ENCODE measurements at regions of chrX and their contacts with region 1.

Region 1: DNA sequence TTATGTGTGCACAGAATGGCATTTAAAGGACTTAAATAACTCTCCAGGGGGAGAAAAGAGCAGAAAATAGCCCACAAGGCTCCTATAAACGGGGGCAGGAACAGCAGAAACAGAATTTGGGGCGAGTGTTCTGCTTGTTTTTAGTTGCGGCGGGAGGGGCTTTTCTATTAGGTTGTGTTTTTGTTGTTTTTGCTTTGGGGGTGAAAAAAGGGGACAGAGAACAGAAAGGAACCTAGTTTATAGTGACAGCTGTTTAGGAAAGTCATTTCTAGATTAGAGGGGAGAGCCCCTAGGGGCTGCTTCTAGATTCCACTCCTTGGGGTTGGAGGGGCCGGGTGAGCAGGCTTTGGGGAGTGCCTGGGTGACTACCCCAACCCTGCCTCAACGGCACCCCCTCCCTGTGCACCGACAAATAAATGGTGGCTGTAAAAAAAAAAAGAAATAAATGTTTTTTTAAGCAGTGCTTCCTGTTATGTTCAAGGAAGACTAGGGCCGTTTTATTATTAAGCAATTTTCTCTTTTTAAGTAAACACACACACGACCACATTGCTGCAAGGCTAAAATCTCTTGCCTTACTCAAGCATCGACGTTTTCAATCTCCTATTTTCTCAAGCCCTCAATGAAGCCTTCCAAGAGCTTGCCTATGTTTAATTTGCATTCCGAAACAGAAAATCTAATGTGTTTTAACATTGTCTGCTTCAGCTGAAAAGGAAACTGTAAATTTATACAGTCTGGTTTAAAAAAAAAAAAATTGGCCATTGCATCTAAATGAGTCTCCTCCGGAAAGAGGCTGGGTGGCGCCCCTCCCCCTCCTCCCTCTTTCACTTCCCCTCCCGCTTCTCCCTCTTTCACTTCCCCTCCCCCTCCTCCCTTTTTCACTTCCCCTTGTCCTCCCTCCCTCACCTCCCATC is 123.3 kb upstream of the TBL1X start:
- DNase-seq: peak; percentile 54
- H3K4me3 ChIP-seq: peak overlapping the region in 1 of 3 experiments; percentile 59
- H3K27ac ChIP-seq: peak overlapping the region; percentile 57
- H3K4me1 ChIP-seq: peaks cover 9% of the 10 kb centered on the region
- H3K27me3 ChIP-seq: no peaks in the 10 kb centered on the region
- CTCF ChIP-seq: no peak
- POLR2A ChIP-seq: no peak

Region 2: GRCh38 chrX:9163214-9163681 is 178.3 kb before region 1 on chrX:
- CTCF ChIA-PET with region 1: no interaction called
- POLR2A ChIA-PET with region 1: no interaction called
- dilution Hi-C with region 1: no loop called
- intact Hi-C with region 1: loop called (anchors 5 kb)
- DNase-seq: peak; percentile 33
- H3K4me3 ChIP-seq: peak overlapping the region in 1 of 3 experiments; percentile 10
- H3K27ac ChIP-seq: peak overlapping the region; percentile 28
- H3K4me1 ChIP-seq: peaks cover 10% of the 10 kb centered on the region
- H3K27me3 ChIP-seq: peaks cover 0 to under 1% of the 10 kb centered on the region in 2 experiments
- CTCF ChIP-seq: no peak
- POLR2A ChIP-seq: no peak

Region 3: GRCh38 chrX:9318213-9318612 is 23.3 kb before region 1 on chrX:
- CTCF ChIA-PET with region 1: no interaction called
- POLR2A ChIA-PET with region 1: no interaction called
- dilution Hi-C with region 1: no loop called
- intact Hi-C with region 1: loop called (anchors 1 kb)
- DNase-seq: peak; percentile 10
- H3K4me3 ChIP-seq: no peak overlapping the region
- H3K27ac ChIP-seq: no peak overlapping the region
- H3K4me1 ChIP-seq: peaks cover 6% of the 10 kb centered on the region
- H3K27me3 ChIP-seq: no peaks in the 10 kb centered on the region
- CTCF ChIP-seq: no peak
- POLR2A ChIP-seq: no peak

Region 4: DNA sequence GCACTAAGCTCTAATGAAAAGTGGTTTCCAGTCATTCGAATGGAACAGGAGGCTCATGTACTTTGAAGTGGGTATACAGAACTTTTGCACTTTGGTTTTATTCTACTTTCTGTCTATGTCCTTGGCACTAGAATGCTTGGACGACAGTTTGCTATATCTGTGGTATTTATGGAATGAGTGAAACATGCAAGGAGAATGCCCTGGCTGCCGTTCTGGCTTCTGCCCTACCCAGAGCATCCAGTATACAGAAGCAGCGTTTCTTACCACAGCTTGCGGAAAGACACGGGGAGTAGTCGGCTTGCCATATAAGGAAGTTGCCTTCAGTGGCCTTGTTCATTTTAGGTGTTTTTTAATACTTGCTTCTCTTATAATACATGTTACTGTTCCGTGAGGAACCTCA is 221.3 kb after region 1 on chrX:
- CTCF ChIA-PET with region 1: no interaction called
- POLR2A ChIA-PET with region 1: no interaction called
- dilution Hi-C with region 1: no loop called
- intact Hi-C with region 1: no loop called
- DNase-seq: no peak
- H3K4me3 ChIP-seq: no peak overlapping the region
- H3K27ac ChIP-seq: no peak overlapping the region
- H3K4me1 ChIP-seq: peaks cover 15% of the 10 kb centered on the region
- H3K27me3 ChIP-seq: no peaks in the 10 kb centered on the region
- CTCF ChIP-seq: no peak
- POLR2A ChIP-seq: no peak

Region 5: DNA sequence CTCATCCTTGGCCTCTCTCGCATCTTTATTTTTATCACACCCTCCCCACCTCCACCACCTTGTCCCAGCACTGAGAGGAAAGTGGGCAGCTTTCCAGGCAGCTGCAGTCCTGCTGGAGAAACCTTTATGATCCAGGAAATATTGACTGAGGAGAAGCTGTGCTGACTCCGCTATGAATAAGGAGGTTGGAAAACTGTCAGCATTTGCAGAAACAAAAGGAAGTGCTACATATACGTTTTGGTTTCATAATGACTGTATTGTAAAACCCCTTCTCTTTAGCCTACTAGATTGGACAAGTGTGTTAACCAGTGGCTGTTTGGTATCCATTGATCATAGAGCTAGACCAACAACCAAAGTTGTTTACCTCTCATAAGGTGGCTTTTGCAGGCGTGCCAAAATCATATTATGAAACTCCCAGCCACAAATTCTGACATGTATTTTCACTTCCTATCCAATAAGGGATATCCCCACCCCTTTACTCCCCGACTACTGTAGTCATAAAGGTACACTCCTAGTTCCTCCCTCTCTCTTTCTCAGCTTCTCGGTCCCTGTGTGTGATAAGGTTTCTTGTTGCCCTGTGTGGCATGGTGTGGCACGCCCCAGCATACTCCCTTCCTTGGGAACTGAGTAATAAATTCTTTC is 335.7 kb after region 1 on chrX:
- CTCF ChIA-PET with region 1: interaction called, 3 read pairs
- POLR2A ChIA-PET with region 1: no interaction called
- dilution Hi-C with region 1: no loop called
- intact Hi-C with region 1: loop called (anchors 5 kb)
- DNase-seq: peak; percentile 87
- H3K4me3 ChIP-seq: no peak overlapping the region
- H3K27ac ChIP-seq: peak overlapping the region; percentile 31
- H3K4me1 ChIP-seq: peaks cover 6% of the 10 kb centered on the region
- H3K27me3 ChIP-seq: no peaks in the 10 kb centered on the region
- CTCF ChIP-seq: no peak
- POLR2A ChIP-seq: no peak

Measured in endothelial cell of umbilical vein (primary cell).